CD8-positive, alpha-beta memory T cell (primary cell): ENCODE measurements at regions of chr9 and their contacts with region 1.

Region 1: GRCh38 chr9:137254624-137255447 is at the start of gene NELFB:
- DNase-seq: peak; percentile 94 to 97 (median 95)
- H3K4me3 ChIP-seq: peak within 1 kb of the TSS; percentile 77
- H3K4me3 Mint-ChIP-seq: peak within 1 kb of the TSS; percentile 86 to 96 (median 88)
- H3K27ac ChIP-seq: peak within 1 kb of the TSS; percentile 73
- H3K27ac Mint-ChIP-seq: peak within 1 kb of the TSS in 7 of 8 donors; percentile 61 to 97 (median 84)
- H3K4me1 ChIP-seq: peaks cover 18% of the 10 kb centered on the region
- H3K4me1 Mint-ChIP-seq: peaks cover 8 to 25% (median 11%) of the 10 kb centered on the region in 3 donors
- H3K27me3 ChIP-seq: no peaks in the 10 kb centered on the region
- H3K27me3 Mint-ChIP-seq: no peaks in the 10 kb centered on the region
- total RNA-seq, gene NELFB: 67.5 to 72.0 TPM

Region 2: GRCh38 chr9:137129456-137130175 is 125.2 kb before region 1 on chr9:
- CTCF ChIA-PET with region 1: interaction called, 14 read pairs
- POLR2A ChIA-PET with region 1: no interaction called
- DNase-seq: peak; percentile 78 to 92 (median 89)
- H3K4me3 ChIP-seq: peak overlapping the region; percentile 78
- H3K4me3 Mint-ChIP-seq: peak overlapping the region; percentile 79 to 99 (median 88)
- H3K27ac ChIP-seq: peak overlapping the region; percentile 81
- H3K27ac Mint-ChIP-seq: peak overlapping the region; percentile 68 to 98 (median 88)
- H3K4me1 ChIP-seq: peaks cover 25% of the 10 kb centered on the region
- H3K4me1 Mint-ChIP-seq: peaks cover 27 to 36% (median 30%) of the 10 kb centered on the region in 3 donors
- H3K27me3 ChIP-seq: no peaks in the 10 kb centered on the region
- H3K27me3 Mint-ChIP-seq: peaks cover 11 to 20% of the 10 kb centered on the region in 2 donors

Region 3: GRCh38 chr9:137269231-137269772 is 14.5 kb after region 1 on chr9:
- CTCF ChIA-PET with region 1: no interaction called
- POLR2A ChIA-PET with region 1: no interaction called
- DNase-seq: no peak
- H3K4me3 ChIP-seq: no peak overlapping the region
- H3K4me3 Mint-ChIP-seq: no peak overlapping the region
- H3K27ac ChIP-seq: peak overlapping the region; percentile 5
- H3K27ac Mint-ChIP-seq: no peak overlapping the region
- H3K4me1 ChIP-seq: peaks cover 14% of the 10 kb centered on the region
- H3K4me1 Mint-ChIP-seq: peaks cover 6 to 11% (median 10%) of the 10 kb centered on the region in 3 donors
- H3K27me3 ChIP-seq: no peaks in the 10 kb centered on the region
- H3K27me3 Mint-ChIP-seq: no peaks in the 10 kb centered on the region

Region 4: GRCh38 chr9:137301081-137301947 is 46.5 kb after region 1 on chr9:
- CTCF ChIA-PET with region 1: no interaction called
- POLR2A ChIA-PET with region 1: no interaction called
- DNase-seq: no peak
- H3K4me3 ChIP-seq: peak overlapping the region; percentile 19
- H3K4me3 Mint-ChIP-seq: peak overlapping the region; percentile 68 to 87 (median 82)
- H3K27ac ChIP-seq: peak overlapping the region; percentile 64
- H3K27ac Mint-ChIP-seq: no peak overlapping the region
- H3K4me1 ChIP-seq: peaks cover 26% of the 10 kb centered on the region
- H3K4me1 Mint-ChIP-seq: peaks cover 5 to 19% (median 7%) of the 10 kb centered on the region in 3 donors
- H3K27me3 ChIP-seq: peaks cover 37% of the 10 kb centered on the region
- H3K27me3 Mint-ChIP-seq: peaks cover 16 to 21% of the 10 kb centered on the region in 2 donors